ENCODE measurements at regions of chr15 and their contacts with region 1.

Region 1: DNA sequence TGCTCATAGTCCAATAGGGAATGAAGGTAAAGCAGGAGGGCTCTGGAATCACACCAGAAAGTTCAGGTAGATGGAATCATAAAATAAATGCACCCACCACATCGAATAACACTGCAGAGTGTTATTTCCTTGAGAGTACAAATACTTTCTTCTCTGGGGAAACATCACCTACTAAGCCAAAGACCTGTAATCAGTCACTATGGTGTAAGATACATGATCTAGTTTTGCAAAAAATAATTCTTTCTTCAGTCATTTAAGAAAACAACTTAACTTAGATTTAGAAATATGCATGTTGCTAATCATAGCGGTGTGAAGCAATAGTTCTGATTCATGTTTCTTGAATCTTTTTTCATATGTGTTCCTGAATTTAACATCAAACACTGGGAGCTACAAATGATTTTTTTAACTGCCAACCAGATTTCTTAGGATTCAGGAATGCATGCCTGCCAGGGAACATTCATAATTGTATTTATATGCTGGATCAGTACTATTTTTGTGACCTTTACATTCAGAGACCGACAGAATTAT is 40.2 kb upstream of the MEIS2 start:
- DNase-seq: no peak
- ATAC-seq: no peak
- H3K4me3 ChIP-seq: no peak overlapping the region
- H3K27ac ChIP-seq: no peak overlapping the region
- H3K4me1 ChIP-seq: no peaks in the 10 kb centered on the region
- H3K27me3 ChIP-seq: no peaks in the 10 kb centered on the region
- CTCF ChIP-seq: no peak
- POLR2A ChIP-seq: no peak

Region 2: GRCh38 chr15:36517758-36518157 is 622.8 kb before region 1 on chr15:
- intact Hi-C with region 1: loop called in 1 of 10 experiments (anchors 10 kb)
- DNase-seq: no peak
- ATAC-seq: no peak
- H3K4me3 ChIP-seq: no peak overlapping the region
- H3K27ac ChIP-seq: no peak overlapping the region
- H3K4me1 ChIP-seq: no peaks in the 10 kb centered on the region
- H3K27me3 ChIP-seq: no peaks in the 10 kb centered on the region
- CTCF ChIP-seq: no peak
- POLR2A ChIP-seq: no peak

Region 3: GRCh38 chr15:37007301-37007700 is 133.3 kb before region 1 on chr15:
- intact Hi-C with region 1: no loop called
- DNase-seq: no peak
- ATAC-seq: peak in 2 of 4 donors; percentile 42 to 64
- H3K4me3 ChIP-seq: no peak overlapping the region
- H3K27ac ChIP-seq: peak overlapping the region in 8 of 12 donors; percentile 2 to 36 (median 14)
- H3K4me1 ChIP-seq: peaks cover 0 to 32% (median 6%) of the 10 kb centered on the region in 12 donors
- H3K27me3 ChIP-seq: no peaks in the 10 kb centered on the region
- CTCF ChIP-seq: no peak
- POLR2A ChIP-seq: no peak

Region 4: GRCh38 chr15:37880009-37880834 is 739.6 kb after region 1 on chr15:
- intact Hi-C with region 1: loop called in 3 of 10 experiments (anchors 10 kb)
- DNase-seq: no peak
- ATAC-seq: peak in 3 of 4 donors; percentile 44 to 68 (median 50)
- H3K4me3 ChIP-seq: no peak overlapping the region
- H3K27ac ChIP-seq: no peak overlapping the region
- H3K4me1 ChIP-seq: peaks cover 0 to 4% (median 0%) of the 10 kb centered on the region in 12 donors
- H3K27me3 ChIP-seq: no peaks in the 10 kb centered on the region
- CTCF ChIP-seq: peak; percentile 45 to 69 (median 58)
- POLR2A ChIP-seq: no peak

Measured in heart left ventricle (tissue), 16 donors.